ENCODE measurements at regions of chr10 and their contacts with region 1.

Region 1: GRCh38 chr10:72215652-72216549 is at the starts of genes ANAPC16 and ASCC1:
- DNase-seq: peak; percentile 66 to 94
- H3K4me3 ChIP-seq: peak within 1 kb of the TSS; percentile 64 to 71
- H3K27ac ChIP-seq: peak within 1 kb of the TSS; percentile 93 to 95
- H3K4me1 ChIP-seq: peaks cover 5 to 35% of the 10 kb centered on the region in 2 donors
- H3K27me3 ChIP-seq: no peaks in the 10 kb centered on the region
- CTCF ChIP-seq: no peak
- total RNA-seq, gene ANAPC16: 22.8 TPM
- total RNA-seq, gene ASCC1: 5.5 TPM

Region 2: DNA sequence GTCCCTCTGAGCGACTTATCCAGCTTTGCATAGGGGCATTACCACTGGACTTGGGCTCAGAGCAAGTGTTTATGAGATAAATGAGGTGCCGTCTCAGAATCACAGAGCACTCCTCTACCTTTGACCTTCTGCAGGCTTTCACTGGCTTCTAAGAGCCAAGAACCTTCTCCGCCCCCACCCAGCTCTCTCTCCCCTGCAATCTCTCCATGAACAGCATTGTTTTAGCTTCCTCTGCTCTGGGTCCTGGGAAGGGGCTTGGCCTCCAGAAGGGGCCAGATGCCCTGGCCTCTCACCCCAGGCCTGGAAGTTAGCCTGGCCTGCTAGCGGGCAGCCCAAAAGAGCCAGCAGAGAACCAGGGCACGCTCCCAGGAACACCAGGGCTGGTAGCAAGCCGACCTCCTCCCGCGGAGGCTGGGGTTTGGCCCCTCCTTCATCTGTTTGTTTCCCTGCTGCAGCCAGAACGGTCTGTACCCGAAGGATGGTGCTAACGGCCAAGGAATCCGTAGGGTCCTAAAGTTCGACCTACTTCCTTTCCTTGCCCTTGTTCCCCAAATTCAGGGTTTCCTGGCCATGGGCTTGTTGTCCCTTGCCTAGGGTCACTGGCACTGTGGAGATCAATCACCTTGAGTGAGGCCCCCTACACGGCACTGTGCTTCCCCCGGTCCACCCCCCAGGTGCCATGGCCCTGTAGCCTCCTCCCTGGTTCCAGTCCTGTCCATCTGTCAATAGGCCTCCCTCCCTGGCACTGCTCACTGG is 39.1 kb after region 1 on chr10:
- intact Hi-C with region 1: loop called (anchors 2 kb)
- DNase-seq: peak; percentile 83 to 96
- H3K4me3 ChIP-seq: peak overlapping the region in 1 of 2 donors; percentile 23
- H3K27ac ChIP-seq: peak overlapping the region; percentile 91 to 97
- H3K4me1 ChIP-seq: peaks cover 43 to 71% of the 10 kb centered on the region in 2 donors
- H3K27me3 ChIP-seq: no peaks in the 10 kb centered on the region
- CTCF ChIP-seq: no peak

Region 3: GRCh38 chr10:72297968-72298773 is 82.3 kb after region 1 on chr10:
- intact Hi-C with region 1: loop called (anchors 1 kb)
- DNase-seq: peak; percentile 97 to 100
- H3K4me3 ChIP-seq: peak overlapping the region; percentile 65 to 77
- H3K27ac ChIP-seq: peak overlapping the region; percentile 89 to 92
- H3K4me1 ChIP-seq: peaks cover 0 to 12% of the 10 kb centered on the region in 2 donors
- H3K27me3 ChIP-seq: no peaks in the 10 kb centered on the region
- CTCF ChIP-seq: no peak

Region 4: GRCh38 chr10:72319416-72320254 is 103.7 kb after region 1 on chr10:
- intact Hi-C with region 1: loop called (anchors 5 kb)
- DNase-seq: peak; percentile 63 to 95
- H3K4me3 ChIP-seq: peak overlapping the region; percentile 63 to 66
- H3K27ac ChIP-seq: peak overlapping the region; percentile 83 to 90
- H3K4me1 ChIP-seq: peaks cover 21 to 45% of the 10 kb centered on the region in 2 donors
- H3K27me3 ChIP-seq: no peaks in the 10 kb centered on the region
- CTCF ChIP-seq: no peak

Region 5: GRCh38 chr10:72328045-72328828 is 112.3 kb after region 1 on chr10:
- intact Hi-C with region 1: loop called (anchors 2 kb)
- DNase-seq: no peak
- H3K4me3 ChIP-seq: no peak overlapping the region
- H3K27ac ChIP-seq: peak overlapping the region; percentile 33 to 42
- H3K4me1 ChIP-seq: peaks cover 0 to 40% of the 10 kb centered on the region in 2 donors
- H3K27me3 ChIP-seq: no peaks in the 10 kb centered on the region
- CTCF ChIP-seq: peak; percentile 59 to 75 (median 72)

Region 6: GRCh38 chr10:73368238-73368637 is 1152.3 kb after region 1 on chr10:
- intact Hi-C with region 1: no loop called
- DNase-seq: no peak
- H3K4me3 ChIP-seq: no peak overlapping the region
- H3K27ac ChIP-seq: no peak overlapping the region
- H3K4me1 ChIP-seq: no peaks in the 10 kb centered on the region
- H3K27me3 ChIP-seq: no peaks in the 10 kb centered on the region
- CTCF ChIP-seq: no peak

Measured in ascending aorta (tissue), 2 donors.